T-cell (primary cell): ENCODE measurements at regions of chr1 and their contacts with region 1.

Region 1: DNA sequence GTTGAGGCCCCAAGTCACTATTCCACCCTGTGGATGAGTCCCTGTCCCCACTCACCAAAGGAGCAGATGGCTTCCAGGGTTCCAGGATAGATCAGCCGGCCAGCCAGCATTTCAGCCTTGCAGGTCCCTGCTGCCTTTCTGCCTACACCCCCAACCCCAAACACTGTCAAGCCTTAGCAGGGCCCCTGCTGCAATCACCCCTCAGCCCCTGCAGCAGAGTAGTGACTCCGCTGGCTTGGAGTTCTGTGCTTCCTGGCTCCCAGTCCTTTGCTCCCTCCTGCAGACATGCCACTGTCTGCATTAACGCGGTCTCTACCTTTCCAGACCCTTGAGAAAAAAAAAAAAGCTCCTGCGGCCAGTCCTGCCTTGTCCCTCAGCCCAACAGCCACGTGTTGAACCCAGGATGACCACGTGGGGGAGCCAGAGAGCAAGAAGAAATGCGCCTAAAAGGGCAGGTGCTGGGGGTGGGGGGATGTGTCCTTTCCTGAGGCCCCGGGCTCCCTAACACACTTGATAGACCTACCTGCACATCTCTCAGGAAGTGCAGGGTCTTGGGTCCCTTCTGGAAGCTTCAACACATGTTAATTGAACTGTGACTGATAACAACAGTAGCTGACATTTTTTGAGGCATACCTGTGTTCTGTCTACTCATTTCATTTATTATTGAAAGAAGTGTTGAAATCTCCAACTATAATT is 37.4 kb downstream of the RASSF5 start:
- DNase-seq: peak; percentile 36 to 88 (median 77)
- ATAC-seq: peak; percentile 83 to 93 (median 90)
- H3K4me3 ChIP-seq: no peak overlapping the region
- H3K4me3 Mint-ChIP-seq: no peak overlapping the region
- H3K27ac ChIP-seq: no peak overlapping the region
- H3K27ac Mint-ChIP-seq: peak overlapping the region; percentile 39 to 48
- H3K4me1 ChIP-seq: peaks cover 0 to 9% of the 10 kb centered on the region in 2 experiments
- H3K4me1 Mint-ChIP-seq: peaks cover 16 to 20% (median 19%) of the 10 kb centered on the region in 3 donors
- H3K27me3 ChIP-seq: no peaks in the 10 kb centered on the region
- H3K27me3 Mint-ChIP-seq: no peaks in the 10 kb centered on the region

Region 2: DNA sequence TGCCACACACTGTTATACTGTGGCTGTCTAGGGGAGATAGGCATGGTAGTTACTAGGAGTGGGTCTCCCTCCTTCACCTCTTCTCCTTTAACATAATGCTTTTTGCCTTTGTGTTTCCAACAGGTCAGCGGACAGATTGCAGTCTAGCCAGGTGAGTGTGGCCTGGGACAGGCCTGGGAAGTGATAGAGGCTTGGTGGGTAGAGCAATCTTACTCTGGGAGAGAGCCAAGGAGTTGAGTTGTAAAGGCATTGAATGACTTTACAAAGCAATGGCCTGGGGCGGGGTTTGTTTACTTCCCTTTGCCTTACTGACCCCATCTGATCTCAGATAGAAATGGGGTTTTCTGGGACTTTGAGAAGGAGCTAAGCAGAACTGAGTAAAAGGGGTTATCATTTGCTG is 125.5 kb before region 1 on chr1:
- CTCF ChIA-PET with region 1: no interaction called
- POLR2A ChIA-PET with region 1: no interaction called
- DNase-seq: no peak
- ATAC-seq: no peak
- H3K4me3 ChIP-seq: no peak overlapping the region
- H3K4me3 Mint-ChIP-seq: no peak overlapping the region
- H3K27ac ChIP-seq: no peak overlapping the region
- H3K27ac Mint-ChIP-seq: no peak overlapping the region
- H3K4me1 ChIP-seq: no peaks in the 10 kb centered on the region
- H3K4me1 Mint-ChIP-seq: no peaks in the 10 kb centered on the region
- H3K27me3 ChIP-seq: no peaks in the 10 kb centered on the region
- H3K27me3 Mint-ChIP-seq: no peaks in the 10 kb centered on the region

Region 3: DNA sequence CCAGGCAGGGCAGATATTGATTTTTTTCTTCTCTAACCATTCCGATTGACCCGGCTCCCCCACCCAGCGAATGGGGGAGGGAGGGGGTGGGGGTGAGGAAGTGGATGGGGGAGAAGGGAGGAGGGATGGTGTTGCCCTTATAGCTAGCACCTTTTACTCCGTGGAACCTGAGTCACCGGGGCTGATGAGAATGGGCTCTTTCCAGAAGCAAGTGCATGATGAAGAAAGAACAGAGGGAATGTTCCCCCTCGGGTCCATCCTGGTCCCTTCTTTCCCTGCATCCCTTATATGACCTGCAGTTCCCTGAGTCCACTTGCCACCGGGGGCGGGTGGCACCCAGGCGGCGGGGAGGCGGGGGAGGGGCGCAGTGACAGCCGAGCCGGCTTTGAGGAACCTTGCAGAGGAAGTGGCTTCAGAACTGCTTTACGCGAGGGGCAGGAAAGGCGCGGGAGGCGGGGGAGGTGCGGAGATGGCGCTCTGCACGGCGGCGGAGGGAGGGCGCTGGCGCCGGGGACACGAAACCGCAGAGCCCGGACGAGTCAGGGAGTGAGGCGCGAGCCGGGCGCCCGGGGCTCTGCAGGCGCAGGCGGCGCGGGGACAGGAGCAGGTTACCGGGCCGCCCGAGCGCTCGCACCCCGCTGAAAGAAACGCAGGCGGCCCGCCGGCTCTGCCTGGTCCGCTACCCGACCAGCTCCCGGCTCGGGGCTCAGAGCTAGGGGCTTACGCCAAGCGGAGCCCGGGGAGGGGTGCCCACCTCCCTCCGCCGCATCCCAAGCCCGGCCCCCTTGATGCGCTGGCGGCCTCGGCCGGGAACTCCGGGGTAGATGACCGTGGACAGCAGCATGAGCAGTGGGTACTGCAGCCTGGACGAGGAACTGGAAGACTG is 12.3 kb after region 1 on chr1:
- CTCF ChIA-PET with region 1: interaction called, 13 to 51 read pairs
- POLR2A ChIA-PET with region 1: interaction called in 1 of 2 experiments, 5 read pairs
- DNase-seq: peak; percentile 82 to 94 (median 88)
- ATAC-seq: peak; percentile 74 to 78 (median 76)
- H3K4me3 ChIP-seq: peak overlapping the region; percentile 97 to 100
- H3K4me3 Mint-ChIP-seq: peak overlapping the region; percentile 88 to 97 (median 96)
- H3K27ac ChIP-seq: peak overlapping the region; percentile 81
- H3K27ac Mint-ChIP-seq: peak overlapping the region; percentile 97 to 99
- H3K4me1 ChIP-seq: peaks cover 58 to 75% of the 10 kb centered on the region in 2 experiments
- H3K4me1 Mint-ChIP-seq: peaks cover 71 to 81% (median 77%) of the 10 kb centered on the region in 3 donors
- H3K27me3 ChIP-seq: no peaks in the 10 kb centered on the region
- H3K27me3 Mint-ChIP-seq: no peaks in the 10 kb centered on the region

Region 4: DNA sequence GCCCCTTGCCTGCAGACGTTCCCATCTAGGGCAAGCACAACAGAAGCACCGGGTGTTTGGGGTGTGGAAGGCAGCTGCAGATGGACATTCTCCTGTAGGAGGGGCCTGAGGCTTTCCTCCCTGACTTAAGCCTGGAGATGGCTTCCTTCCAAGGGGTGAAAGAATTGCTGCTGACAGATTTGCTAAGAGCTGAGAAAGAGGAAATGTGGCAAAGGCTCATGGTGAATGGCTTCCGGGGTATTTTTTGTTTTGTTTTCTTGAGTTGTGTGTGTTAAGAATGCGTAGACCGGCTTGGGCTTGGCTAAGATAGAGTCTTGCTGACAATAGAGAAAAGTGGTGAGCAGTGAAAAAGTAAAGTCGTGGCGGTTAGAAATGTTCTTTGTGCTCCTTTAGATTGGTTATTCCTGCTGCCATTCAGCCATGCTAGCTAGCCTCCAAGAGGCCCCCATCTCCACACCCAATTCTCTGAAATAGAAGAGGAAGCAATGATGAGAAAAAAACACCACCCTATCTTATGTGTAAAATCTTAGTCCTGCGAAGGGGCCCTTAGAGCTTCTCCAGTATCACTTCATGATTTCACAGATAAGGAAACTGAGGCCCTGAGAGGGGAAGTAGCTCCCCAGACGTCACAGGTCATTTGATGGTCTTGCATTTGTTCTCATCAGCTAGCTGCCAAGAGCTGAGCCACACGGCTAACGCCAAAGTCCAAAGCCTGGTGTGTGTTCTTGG is 30.6 kb after region 1 on chr1:
- CTCF ChIA-PET with region 1: interaction called, 17 to 133 read pairs
- POLR2A ChIA-PET with region 1: interaction called, 4 to 14 read pairs
- DNase-seq: peak in 31 of 35 experiments; percentile 34 to 85 (median 58)
- ATAC-seq: peak; percentile 75 to 81 (median 77)
- H3K4me3 ChIP-seq: peak overlapping the region; percentile 8 to 35
- H3K4me3 Mint-ChIP-seq: peak overlapping the region; percentile 73 to 96 (median 74)
- H3K27ac ChIP-seq: peak overlapping the region; percentile 94
- H3K27ac Mint-ChIP-seq: peak overlapping the region; percentile 97 to 99
- H3K4me1 ChIP-seq: peaks cover 82 to 98% of the 10 kb centered on the region in 2 experiments
- H3K4me1 Mint-ChIP-seq: peaks cover 99 to 100% (median 99%) of the 10 kb centered on the region in 3 donors
- H3K27me3 ChIP-seq: no peaks in the 10 kb centered on the region
- H3K27me3 Mint-ChIP-seq: no peaks in the 10 kb centered on the region

Region 5: GRCh38 chr1:206658264-206658980 is 113.7 kb after region 1 on chr1:
- CTCF ChIA-PET with region 1: interaction called, 11 to 13 read pairs
- POLR2A ChIA-PET with region 1: no interaction called
- DNase-seq: peak in 28 of 35 experiments; percentile 17 to 70 (median 38)
- ATAC-seq: peak; percentile 42 to 78 (median 76)
- H3K4me3 ChIP-seq: no peak overlapping the region
- H3K4me3 Mint-ChIP-seq: no peak overlapping the region
- H3K27ac ChIP-seq: no peak overlapping the region
- H3K27ac Mint-ChIP-seq: no peak overlapping the region
- H3K4me1 ChIP-seq: peaks cover 0 to 8% of the 10 kb centered on the region in 2 experiments
- H3K4me1 Mint-ChIP-seq: peaks cover 0 to 5% (median 2%) of the 10 kb centered on the region in 3 donors
- H3K27me3 ChIP-seq: peaks cover 0 to 37% of the 10 kb centered on the region in 2 experiments
- H3K27me3 Mint-ChIP-seq: peaks cover 26 to 37% of the 10 kb centered on the region in 2 donors